ENCODE measurements at regions of chr14 and their contacts with region 1.

Region 1: GRCh38 chr14:103808403-103809001 is 38.9 kb downstream of the PPP1R13B start:
- DNase-seq: peak; percentile 74
- ATAC-seq: peak; percentile 74
- H3K4me3 ChIP-seq: no peak overlapping the region
- H3K4me3 Mint-ChIP-seq: no peak overlapping the region
- H3K27ac ChIP-seq: no peak overlapping the region
- H3K27ac Mint-ChIP-seq: no peak overlapping the region
- H3K4me1 ChIP-seq: peaks cover 3 to 4% of the 10 kb centered on the region in 2 donors
- H3K4me1 Mint-ChIP-seq: peaks cover 17% of the 10 kb centered on the region
- H3K27me3 ChIP-seq: no peaks in the 10 kb centered on the region
- H3K27me3 Mint-ChIP-seq: no peaks in the 10 kb centered on the region
- CTCF ChIP-seq: peak; percentile 98

Region 2: GRCh38 chr14:103699901-103700752 is 108.4 kb before region 1 on chr14:
- CTCF ChIA-PET with region 1: no interaction called
- POLR2A ChIA-PET with region 1: no interaction called
- intact Hi-C with region 1: no loop called
- DNase-seq: peak; percentile 18
- ATAC-seq: no peak
- H3K4me3 ChIP-seq: no peak overlapping the region
- H3K4me3 Mint-ChIP-seq: no peak overlapping the region
- H3K27ac ChIP-seq: no peak overlapping the region
- H3K27ac Mint-ChIP-seq: no peak overlapping the region
- H3K4me1 ChIP-seq: peaks cover 57 to 60% of the 10 kb centered on the region in 2 donors
- H3K4me1 Mint-ChIP-seq: peaks cover 68% of the 10 kb centered on the region
- H3K27me3 ChIP-seq: no peaks in the 10 kb centered on the region
- H3K27me3 Mint-ChIP-seq: no peaks in the 10 kb centered on the region
- CTCF ChIP-seq: no peak

Region 3: GRCh38 chr14:103715052-103716000 is 93.2 kb before region 1 on chr14 and contains the starts of genes XRCC3 and ZFYVE21:
- CTCF ChIA-PET with region 1: no interaction called
- POLR2A ChIA-PET with region 1: no interaction called
- intact Hi-C with region 1: no loop called
- DNase-seq: peak; percentile 100
- ATAC-seq: peak; percentile 95
- H3K4me3 ChIP-seq: peak within 1 kb of the TSS; percentile 12 to 82 (median 60)
- H3K4me3 Mint-ChIP-seq: peak within 1 kb of the TSS; percentile 91
- H3K27ac ChIP-seq: peak within 1 kb of the TSS in 1 of 2 donors; percentile 55
- H3K27ac Mint-ChIP-seq: peak within 1 kb of the TSS; percentile 85
- H3K4me1 ChIP-seq: peaks cover 15 to 24% of the 10 kb centered on the region in 2 donors
- H3K4me1 Mint-ChIP-seq: peaks cover 36% of the 10 kb centered on the region
- H3K27me3 ChIP-seq: no peaks in the 10 kb centered on the region
- H3K27me3 Mint-ChIP-seq: no peaks in the 10 kb centered on the region
- CTCF ChIP-seq: no peak
- total RNA-seq, gene XRCC3: 18.0 and 18.6 TPM in 2 replicates
- total RNA-seq, gene ZFYVE21: 18.6 and 24.3 TPM in 2 replicates

Region 4: DNA sequence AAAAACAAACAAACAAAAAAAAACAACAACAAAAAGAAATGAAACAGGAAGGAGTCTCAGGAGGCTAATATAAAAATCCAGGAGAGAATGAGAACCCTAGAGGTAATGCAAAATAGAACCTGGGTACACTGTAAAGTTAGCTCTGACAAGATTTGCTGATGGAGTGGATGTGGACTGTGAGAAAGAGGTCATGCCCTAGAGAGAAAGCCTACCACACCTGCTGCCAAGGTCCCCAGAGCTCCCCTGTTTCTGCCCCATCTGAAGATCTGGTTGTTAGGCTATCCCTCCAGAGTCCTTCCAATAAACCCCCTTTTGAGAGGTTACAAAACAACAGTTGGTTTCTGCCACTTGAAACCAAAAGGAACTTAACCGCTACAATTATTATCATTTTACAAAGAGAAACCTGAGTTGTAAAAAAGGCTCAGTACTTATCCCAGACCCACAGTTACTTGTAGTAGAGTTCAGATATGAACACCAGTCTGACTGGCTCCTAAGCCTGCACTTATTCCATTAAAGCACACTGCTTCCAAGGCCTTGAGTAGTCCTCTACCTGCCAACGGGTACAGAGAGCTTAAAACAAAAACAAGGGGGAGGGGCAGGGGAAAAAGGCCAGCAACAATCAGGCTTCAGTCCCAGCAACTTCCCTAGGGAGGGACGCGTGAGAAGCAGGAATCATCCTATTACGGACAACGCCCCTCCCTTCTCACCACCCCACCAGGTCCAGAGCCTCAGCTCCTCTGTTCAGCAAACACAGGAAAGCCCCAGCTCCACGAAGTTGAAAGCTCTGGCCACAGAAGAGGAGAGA is 11.2 kb after region 1 on chr14:
- CTCF ChIA-PET with region 1: interaction called, 20 read pairs
- POLR2A ChIA-PET with region 1: no interaction called
- intact Hi-C with region 1: no loop called
- DNase-seq: no peak
- ATAC-seq: no peak
- H3K4me3 ChIP-seq: no peak overlapping the region
- H3K4me3 Mint-ChIP-seq: no peak overlapping the region
- H3K27ac ChIP-seq: no peak overlapping the region
- H3K27ac Mint-ChIP-seq: no peak overlapping the region
- H3K4me1 ChIP-seq: peaks cover 16 to 18% of the 10 kb centered on the region in 2 donors
- H3K4me1 Mint-ChIP-seq: peaks cover 36% of the 10 kb centered on the region
- H3K27me3 ChIP-seq: no peaks in the 10 kb centered on the region
- H3K27me3 Mint-ChIP-seq: no peaks in the 10 kb centered on the region
- CTCF ChIP-seq: no peak

Region 5: DNA sequence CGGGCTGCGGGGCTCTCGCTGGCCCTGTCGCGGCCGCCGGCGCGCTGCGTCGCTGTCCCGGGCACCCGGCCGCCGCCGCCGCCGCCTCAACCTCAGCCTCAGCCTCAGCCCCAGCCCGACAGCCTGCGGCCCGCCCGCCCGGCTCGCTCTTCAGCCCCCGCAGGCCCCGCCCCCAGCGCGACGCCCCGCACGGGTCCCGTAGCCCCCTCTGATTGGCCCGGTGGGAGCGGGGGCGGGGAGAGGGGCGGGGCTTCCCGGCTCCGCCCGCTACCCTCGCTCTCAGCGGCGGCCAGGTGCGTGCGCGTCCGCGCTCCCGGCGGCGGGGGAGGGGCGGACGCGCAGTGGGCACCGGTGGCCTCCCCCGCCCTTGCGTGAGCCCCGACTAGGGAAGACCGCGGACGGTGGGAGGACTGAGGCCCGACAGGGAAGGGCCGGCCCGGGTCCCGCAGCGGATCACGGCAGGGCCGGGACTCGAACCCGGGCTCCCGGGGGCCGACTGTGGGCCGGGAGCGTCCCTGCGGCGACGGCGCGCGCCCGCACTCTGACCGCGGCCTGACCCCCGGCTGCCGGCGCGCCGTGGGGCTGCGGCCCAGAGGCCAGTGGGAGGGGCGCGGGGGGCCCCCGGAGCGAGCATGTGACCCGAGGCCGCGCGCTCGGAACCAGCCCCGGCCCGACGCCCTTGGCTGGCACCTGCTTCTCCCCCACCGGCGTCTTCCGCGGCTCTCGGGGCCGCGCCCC is 39.1 kb after region 1 on chr14 and contains the start of gene PPP1R13B:
- CTCF ChIA-PET with region 1: no interaction called
- POLR2A ChIA-PET with region 1: no interaction called
- intact Hi-C with region 1: loop called (anchors 1 kb)
- DNase-seq: peak; percentile 95
- ATAC-seq: peak; percentile 97
- H3K4me3 ChIP-seq: peak within 1 kb of the TSS; percentile 44 to 73 (median 60)
- H3K4me3 Mint-ChIP-seq: peak within 1 kb of the TSS; percentile 91
- H3K27ac ChIP-seq: peak within 1 kb of the TSS in 1 of 2 donors; percentile 59
- H3K27ac Mint-ChIP-seq: peak within 1 kb of the TSS; percentile 83
- H3K4me1 ChIP-seq: peaks cover 10 to 14% of the 10 kb centered on the region in 2 donors
- H3K4me1 Mint-ChIP-seq: peaks cover 16% of the 10 kb centered on the region
- H3K27me3 ChIP-seq: no peaks in the 10 kb centered on the region
- H3K27me3 Mint-ChIP-seq: no peaks in the 10 kb centered on the region
- CTCF ChIP-seq: no peak
- total RNA-seq, gene PPP1R13B: 27.7 and 38.6 TPM in 2 replicates

Region 6: DNA sequence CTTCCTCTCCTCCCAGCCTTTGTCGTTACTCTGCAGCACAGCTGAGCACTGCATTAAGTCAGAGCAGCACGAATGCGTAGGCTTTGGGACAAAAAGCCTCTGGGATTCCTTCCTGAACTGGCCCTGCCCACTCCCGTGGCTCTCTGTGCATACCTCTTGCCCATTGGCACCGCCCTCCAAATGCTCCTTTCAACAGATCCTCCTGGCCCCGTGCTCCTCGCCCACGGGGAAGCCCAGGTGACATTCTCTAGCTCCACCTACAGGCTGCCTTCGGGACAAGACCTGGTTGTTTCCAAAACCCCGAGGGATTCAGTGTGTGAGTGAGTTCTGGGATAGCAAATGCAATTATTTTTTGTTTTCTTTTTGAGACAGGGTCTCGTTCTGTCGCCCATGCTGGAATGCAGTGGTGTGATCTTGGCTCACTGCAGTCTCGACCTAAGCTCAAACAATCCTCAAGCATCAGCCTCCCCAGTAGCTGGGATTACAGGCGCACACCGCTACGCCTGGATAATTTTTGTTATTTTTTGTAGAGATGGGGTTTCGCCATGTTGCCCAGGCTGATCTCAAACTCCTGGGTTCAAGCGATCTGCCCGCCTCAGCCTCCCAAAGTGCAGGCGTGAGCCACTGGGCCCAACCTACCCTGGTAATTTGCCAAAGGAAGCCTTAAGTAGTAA is 101.9 kb after region 1 on chr14:
- CTCF ChIA-PET with region 1: interaction called, 136 read pairs
- POLR2A ChIA-PET with region 1: no interaction called
- intact Hi-C with region 1: loop called (anchors 1 kb)
- DNase-seq: peak; percentile 72
- ATAC-seq: peak; percentile 73
- H3K4me3 ChIP-seq: peak overlapping the region in 1 of 5 experiments; percentile 15
- H3K4me3 Mint-ChIP-seq: peak overlapping the region; percentile 51
- H3K27ac ChIP-seq: no peak overlapping the region
- H3K27ac Mint-ChIP-seq: no peak overlapping the region
- H3K4me1 ChIP-seq: peaks cover 4 to 10% of the 10 kb centered on the region in 2 donors
- H3K4me1 Mint-ChIP-seq: peaks cover 8% of the 10 kb centered on the region
- H3K27me3 ChIP-seq: no peaks in the 10 kb centered on the region
- H3K27me3 Mint-ChIP-seq: no peaks in the 10 kb centered on the region
- CTCF ChIP-seq: peak; percentile 78

Region 7: GRCh38 chr14:103973354-103973753 is 164.9 kb after region 1 on chr14:
- CTCF ChIA-PET with region 1: no interaction called
- POLR2A ChIA-PET with region 1: no interaction called
- intact Hi-C with region 1: loop called (anchors 2 kb)
- DNase-seq: no peak
- ATAC-seq: no peak
- H3K4me3 ChIP-seq: no peak overlapping the region
- H3K4me3 Mint-ChIP-seq: no peak overlapping the region
- H3K27ac ChIP-seq: no peak overlapping the region
- H3K27ac Mint-ChIP-seq: no peak overlapping the region
- H3K4me1 ChIP-seq: no peaks in the 10 kb centered on the region
- H3K4me1 Mint-ChIP-seq: no peaks in the 10 kb centered on the region
- H3K27me3 ChIP-seq: no peaks in the 10 kb centered on the region
- H3K27me3 Mint-ChIP-seq: peaks cover 24% of the 10 kb centered on the region
- CTCF ChIP-seq: no peak

Region 8: DNA sequence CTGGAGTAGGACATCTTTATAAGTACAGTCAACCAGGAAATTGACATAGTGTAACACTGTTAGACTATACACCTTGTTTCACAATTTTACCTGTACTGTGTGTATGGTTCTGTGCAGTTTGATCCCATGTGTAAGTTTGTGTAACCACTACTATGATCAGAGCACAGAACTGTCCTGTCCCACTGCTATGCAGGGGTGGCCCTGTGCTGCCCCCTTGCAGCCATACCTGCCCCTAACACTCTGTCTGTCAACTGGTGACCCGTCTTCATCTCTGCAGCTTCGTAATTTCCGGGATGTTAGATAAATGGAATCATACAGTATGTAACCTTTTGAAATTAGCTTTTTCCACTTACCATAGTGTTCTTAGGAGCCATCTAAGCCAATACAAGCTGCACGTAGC is 192.5 kb after region 1 on chr14:
- CTCF ChIA-PET with region 1: interaction called, 10 read pairs
- POLR2A ChIA-PET with region 1: no interaction called
- intact Hi-C with region 1: no loop called
- DNase-seq: peak; percentile 17
- ATAC-seq: no peak
- H3K4me3 ChIP-seq: no peak overlapping the region
- H3K4me3 Mint-ChIP-seq: no peak overlapping the region
- H3K27ac ChIP-seq: no peak overlapping the region
- H3K27ac Mint-ChIP-seq: no peak overlapping the region
- H3K4me1 ChIP-seq: no peaks in the 10 kb centered on the region
- H3K4me1 Mint-ChIP-seq: no peaks in the 10 kb centered on the region
- H3K27me3 ChIP-seq: peaks cover 0 to 2% (median 0%) of the 10 kb centered on the region in 4 experiments
- H3K27me3 Mint-ChIP-seq: peaks cover 13% of the 10 kb centered on the region
- CTCF ChIP-seq: peak; percentile 29

Measured in B cell (primary cell).